ENCODE measurements at regions of chr3 and their contacts with region 1.

Region 1: GRCh38 chr3:187164885-187165543 is 25.7 kb upstream of the RPL39L start:
- DNase-seq: no peak
- ATAC-seq: peak; percentile 43 to 45
- H3K4me3 ChIP-seq: no peak overlapping the region
- H3K27ac ChIP-seq: no peak overlapping the region
- H3K4me1 ChIP-seq: no peaks in the 10 kb centered on the region
- H3K27me3 ChIP-seq: no peaks in the 10 kb centered on the region

Region 2: GRCh38 chr3:186849374-186849975 is 315.5 kb before region 1 on chr3:
- intact Hi-C with region 1: loop called (anchors 2 to 5 kb)
- DNase-seq: no peak
- ATAC-seq: peak in 1 of 2 donors; percentile 67
- H3K4me3 ChIP-seq: no peak overlapping the region
- H3K27ac ChIP-seq: no peak overlapping the region
- H3K4me1 ChIP-seq: no peaks in the 10 kb centered on the region
- H3K27me3 ChIP-seq: no peaks in the 10 kb centered on the region

Region 3: GRCh38 chr3:187112934-187113793 is 51.9 kb before region 1 on chr3:
- intact Hi-C with region 1: loop called in 2 of 4 experiments (anchors 5 to 10 kb)
- DNase-seq: no peak
- ATAC-seq: no peak
- H3K4me3 ChIP-seq: no peak overlapping the region
- H3K27ac ChIP-seq: no peak overlapping the region
- H3K4me1 ChIP-seq: no peaks in the 10 kb centered on the region
- H3K27me3 ChIP-seq: no peaks in the 10 kb centered on the region